Dorsolateral prefrontal cortex (tissue), 120 donors: ENCODE measurements at regions of chr2 and their contacts with region 1.

Region 1: DNA sequence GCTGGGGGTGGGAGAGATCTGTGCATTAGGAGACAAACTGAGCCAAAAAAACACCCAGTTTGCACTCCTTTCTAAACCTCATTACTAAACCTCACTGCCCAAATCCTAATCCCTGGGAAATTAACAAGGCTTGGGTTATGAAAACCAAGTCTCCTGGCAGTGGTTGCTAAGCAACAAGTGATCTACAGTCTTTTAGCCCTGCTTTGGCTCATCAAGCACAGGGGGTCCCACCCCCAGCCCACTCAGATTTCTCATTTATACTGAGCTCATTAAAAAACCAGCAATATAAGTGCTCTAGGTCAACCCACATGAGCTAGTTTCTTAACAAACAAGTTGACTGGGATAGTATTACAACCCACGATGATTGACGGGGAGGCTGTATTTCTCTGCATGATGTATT is 18.4 kb downstream of the DNER start:
- DNase-seq: no peak
- H3K4me3 ChIP-seq: no peak overlapping the region
- H3K27ac ChIP-seq: no peak overlapping the region
- H3K27me3 ChIP-seq: no peaks in the 10 kb centered on the region
- CTCF ChIP-seq: no peak

Region 2: GRCh38 chr2:229660951-229661350 is 35.0 kb before region 1 on chr2:
- intact Hi-C with region 1: loop called in 1 of 2 experiments (anchors 5 kb)
- DNase-seq: no peak
- H3K4me3 ChIP-seq: no peak overlapping the region
- H3K27ac ChIP-seq: no peak overlapping the region
- H3K27me3 ChIP-seq: no peaks in the 10 kb centered on the region
- CTCF ChIP-seq: no peak